ENCODE measurements at regions of chr6 and their contacts with region 1.

Region 1: GRCh38 chr6:113858480-113859348 is 1.6 kb downstream of the MARCKS start:
- DNase-seq: peak; percentile 37 to 84 (median 58)
- ATAC-seq: peak; percentile 75 to 91 (median 83)
- H3K4me3 ChIP-seq: peak overlapping the region; percentile 45 to 89
- H3K4me3 Mint-ChIP-seq: peak overlapping the region in 2 of 3 donors; percentile 28 to 67
- H3K27ac ChIP-seq: no peak overlapping the region
- H3K27ac Mint-ChIP-seq: no peak overlapping the region
- H3K4me1 ChIP-seq: peaks cover 22 to 49% of the 10 kb centered on the region in 2 experiments
- H3K4me1 Mint-ChIP-seq: peaks cover 0 to 24% (median 21%) of the 10 kb centered on the region in 3 donors
- H3K27me3 ChIP-seq: peaks cover 0 to 51% of the 10 kb centered on the region in 2 experiments
- H3K27me3 Mint-ChIP-seq: peaks cover 30 to 41% of the 10 kb centered on the region in 2 donors

Region 2: DNA sequence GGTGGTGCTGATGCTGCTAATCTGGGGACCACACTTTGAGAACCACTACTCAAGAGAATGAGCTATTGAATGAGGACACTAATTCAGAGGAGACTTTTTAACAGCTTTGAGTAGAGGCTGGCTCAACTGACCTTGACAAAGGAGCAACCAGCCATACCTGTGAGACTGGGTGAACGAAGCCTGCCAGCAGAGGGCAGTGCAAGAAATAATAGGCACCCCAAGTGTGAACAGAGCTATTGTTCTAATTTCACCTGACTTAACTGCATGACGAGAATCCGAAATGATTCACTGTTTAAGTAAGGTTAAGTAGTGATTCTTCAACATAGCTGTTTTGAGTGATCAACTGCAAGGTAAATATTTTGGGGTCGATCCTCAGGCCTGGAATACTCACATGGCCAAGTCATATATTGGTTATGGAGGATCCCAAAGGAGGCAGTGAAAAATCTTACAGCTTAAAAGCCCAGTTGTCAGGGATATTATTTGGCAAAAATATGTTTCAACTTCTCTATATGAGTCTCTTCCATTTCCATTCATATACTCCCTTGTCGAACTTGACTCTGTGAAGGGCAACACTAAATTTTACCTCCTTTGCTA is 552.1 kb before region 1 on chr6:
- CTCF ChIA-PET with region 1: interaction called, 7 to 10 read pairs
- POLR2A ChIA-PET with region 1: no interaction called
- DNase-seq: peak in 22 of 35 experiments; percentile 0 to 34 (median 6)
- ATAC-seq: no peak
- H3K4me3 ChIP-seq: no peak overlapping the region
- H3K4me3 Mint-ChIP-seq: no peak overlapping the region
- H3K27ac ChIP-seq: no peak overlapping the region
- H3K27ac Mint-ChIP-seq: no peak overlapping the region
- H3K4me1 ChIP-seq: no peaks in the 10 kb centered on the region
- H3K4me1 Mint-ChIP-seq: no peaks in the 10 kb centered on the region
- H3K27me3 ChIP-seq: no peaks in the 10 kb centered on the region
- H3K27me3 Mint-ChIP-seq: peaks cover 0 to 3% of the 10 kb centered on the region in 2 donors

Region 3: DNA sequence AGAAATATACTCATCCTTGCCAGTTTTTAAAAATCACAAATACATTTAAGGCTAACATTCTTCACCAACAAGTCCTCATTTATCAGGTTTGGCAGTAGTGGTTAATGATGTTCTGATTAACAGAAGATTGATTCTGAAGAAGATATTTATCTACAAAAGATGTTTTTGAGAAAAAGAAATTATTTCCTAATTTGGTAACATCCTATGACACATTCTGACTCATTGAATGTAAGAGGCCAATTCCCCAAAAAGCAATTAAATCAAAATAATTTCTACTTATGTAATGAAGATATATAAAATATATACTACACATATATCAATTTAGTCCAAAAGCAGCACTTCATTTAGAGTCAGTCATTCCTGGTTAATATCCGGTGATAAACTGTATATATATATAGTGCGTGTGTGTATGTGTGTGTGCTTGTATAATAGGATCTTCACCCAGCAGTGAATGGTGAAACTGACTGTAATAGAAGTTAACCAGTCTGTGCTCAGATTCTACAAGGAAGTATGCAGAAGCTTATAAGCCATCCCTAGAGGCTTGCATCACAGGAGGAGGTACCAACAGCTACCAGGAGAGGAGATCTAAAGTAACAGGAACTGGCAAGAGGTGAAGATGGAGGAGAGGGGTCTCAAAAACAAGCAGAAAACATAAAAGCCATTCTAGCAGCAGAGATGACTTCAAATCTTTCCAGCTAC is 84.4 kb before region 1 on chr6:
- CTCF ChIA-PET with region 1: no interaction called
- POLR2A ChIA-PET with region 1: no interaction called
- DNase-seq: no peak
- ATAC-seq: no peak
- H3K4me3 ChIP-seq: no peak overlapping the region
- H3K4me3 Mint-ChIP-seq: no peak overlapping the region
- H3K27ac ChIP-seq: no peak overlapping the region
- H3K27ac Mint-ChIP-seq: no peak overlapping the region
- H3K4me1 ChIP-seq: no peaks in the 10 kb centered on the region
- H3K4me1 Mint-ChIP-seq: no peaks in the 10 kb centered on the region
- H3K27me3 ChIP-seq: no peaks in the 10 kb centered on the region
- H3K27me3 Mint-ChIP-seq: peaks cover 1 to 6% of the 10 kb centered on the region in 2 donors

Region 4: GRCh38 chr6:113873043-113873667 is 14.4 kb after region 1 on chr6:
- CTCF ChIA-PET with region 1: no interaction called
- POLR2A ChIA-PET with region 1: no interaction called
- DNase-seq: peak in 3 of 35 experiments; percentile 19 to 22 (median 19)
- ATAC-seq: peak in 2 of 4 experiments; percentile 33 to 45
- H3K4me3 ChIP-seq: peak overlapping the region in 1 of 2 donors; percentile 59
- H3K4me3 Mint-ChIP-seq: peak overlapping the region in 1 of 3 donors; percentile 10
- H3K27ac ChIP-seq: no peak overlapping the region
- H3K27ac Mint-ChIP-seq: no peak overlapping the region
- H3K4me1 ChIP-seq: peaks cover 3 to 4% of the 10 kb centered on the region in 2 experiments
- H3K4me1 Mint-ChIP-seq: peaks cover 7 to 9% (median 7%) of the 10 kb centered on the region in 3 donors
- H3K27me3 ChIP-seq: peaks cover 0 to 10% of the 10 kb centered on the region in 2 experiments
- H3K27me3 Mint-ChIP-seq: peaks cover 23 to 29% of the 10 kb centered on the region in 2 donors

Region 5: GRCh38 chr6:113944701-113945100 is 86.0 kb after region 1 on chr6:
- CTCF ChIA-PET with region 1: no interaction called
- POLR2A ChIA-PET with region 1: interaction called in 1 of 2 experiments, 11 read pairs
- DNase-seq: no peak
- ATAC-seq: no peak
- H3K4me3 ChIP-seq: no peak overlapping the region
- H3K4me3 Mint-ChIP-seq: no peak overlapping the region
- H3K27ac ChIP-seq: no peak overlapping the region
- H3K27ac Mint-ChIP-seq: no peak overlapping the region
- H3K4me1 ChIP-seq: no peaks in the 10 kb centered on the region
- H3K4me1 Mint-ChIP-seq: no peaks in the 10 kb centered on the region
- H3K27me3 ChIP-seq: no peaks in the 10 kb centered on the region
- H3K27me3 Mint-ChIP-seq: no peaks in the 10 kb centered on the region

Region 6: GRCh38 chr6:114135363-114135992 is 276.8 kb after region 1 on chr6:
- CTCF ChIA-PET with region 1: no interaction called
- POLR2A ChIA-PET with region 1: no interaction called
- DNase-seq: no peak
- ATAC-seq: no peak
- H3K4me3 ChIP-seq: no peak overlapping the region
- H3K4me3 Mint-ChIP-seq: no peak overlapping the region
- H3K27ac ChIP-seq: no peak overlapping the region
- H3K27ac Mint-ChIP-seq: no peak overlapping the region
- H3K4me1 ChIP-seq: no peaks in the 10 kb centered on the region
- H3K4me1 Mint-ChIP-seq: no peaks in the 10 kb centered on the region
- H3K27me3 ChIP-seq: no peaks in the 10 kb centered on the region
- H3K27me3 Mint-ChIP-seq: peaks cover 6 to 32% of the 10 kb centered on the region in 2 donors

Region 7: GRCh38 chr6:114267897-114268296 is 409.2 kb after region 1 on chr6:
- CTCF ChIA-PET with region 1: interaction called in 1 of 2 experiments, 12 read pairs
- POLR2A ChIA-PET with region 1: no interaction called
- DNase-seq: no peak
- ATAC-seq: no peak
- H3K4me3 ChIP-seq: no peak overlapping the region
- H3K4me3 Mint-ChIP-seq: no peak overlapping the region
- H3K27ac ChIP-seq: no peak overlapping the region
- H3K27ac Mint-ChIP-seq: no peak overlapping the region
- H3K4me1 ChIP-seq: no peaks in the 10 kb centered on the region
- H3K4me1 Mint-ChIP-seq: no peaks in the 10 kb centered on the region
- H3K27me3 ChIP-seq: no peaks in the 10 kb centered on the region
- H3K27me3 Mint-ChIP-seq: no peaks in the 10 kb centered on the region

Measured in T-cell (primary cell).